ENCODE measurements at regions of chr10 and their contacts with region 1.

Region 1: DNA sequence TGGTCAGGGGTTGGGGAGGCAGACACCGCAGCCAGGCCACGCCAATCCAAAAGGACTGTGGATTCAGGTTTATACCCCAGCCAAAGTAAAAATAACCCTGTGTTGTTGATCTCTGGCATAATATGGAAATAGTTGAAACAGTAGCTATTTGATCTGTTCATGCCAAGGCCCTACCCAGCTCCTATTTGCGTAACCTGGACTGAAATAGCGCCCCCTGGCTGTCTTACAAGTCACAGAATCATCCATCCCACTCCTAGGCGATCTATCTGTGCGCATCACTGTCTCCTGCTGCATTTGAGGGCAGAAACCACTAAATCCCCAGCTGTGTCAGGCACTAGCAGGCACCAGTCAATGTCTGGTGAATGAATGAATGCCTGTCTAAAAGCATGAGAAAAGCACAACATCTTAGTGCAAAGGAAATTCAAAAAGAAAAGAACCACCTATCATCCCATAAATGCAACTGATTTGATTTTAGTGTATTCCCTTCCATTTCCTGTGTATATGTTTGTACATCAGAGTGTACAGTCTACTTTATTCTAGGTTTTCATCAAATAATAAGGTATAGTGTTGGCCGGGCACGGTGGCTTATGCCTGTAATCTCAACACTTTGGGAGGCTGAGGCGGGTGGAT is 160.0 kb downstream of the SLIT1 start:
- DNase-seq: peak; percentile 70
- CTCF ChIP-seq: peak; percentile 44

Region 2: DNA sequence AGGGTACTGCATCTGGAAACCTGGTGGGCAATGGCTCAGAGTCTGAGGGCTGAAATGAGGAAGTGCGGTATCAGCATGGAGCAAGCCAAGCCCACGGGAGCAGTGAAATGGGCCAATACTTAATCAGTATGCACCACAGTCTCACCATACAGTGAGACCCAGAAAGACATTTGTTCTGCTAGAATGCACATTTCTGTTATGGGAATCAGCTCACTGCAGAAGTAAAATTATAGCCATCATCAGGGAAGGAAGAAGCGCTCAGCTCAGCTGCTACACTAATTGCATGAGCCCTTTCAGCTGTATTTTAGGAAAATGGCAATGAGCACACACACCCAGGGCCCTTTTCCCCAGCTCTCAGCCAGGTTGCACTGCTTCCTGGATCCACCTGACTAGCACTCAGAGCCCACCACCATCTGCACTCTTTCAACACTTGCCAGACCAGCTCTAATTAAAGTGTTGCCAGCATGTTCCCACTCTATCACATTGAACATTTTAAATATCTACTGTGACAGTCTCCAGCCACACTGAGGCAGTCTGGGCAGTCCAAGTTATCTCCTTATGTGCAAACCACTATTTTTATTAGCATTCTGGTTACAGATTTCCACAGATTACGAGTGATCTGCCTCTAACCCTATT is 261.2 kb before region 1 on chr10:
- CTCF ChIA-PET with region 1: interaction called, 10 read pairs
- POLR2A ChIA-PET with region 1: no interaction called
- DNase-seq: peak; percentile 32
- CTCF ChIP-seq: no peak

Region 3: GRCh38 chr10:96878057-96878456 is 147.7 kb before region 1 on chr10:
- CTCF ChIA-PET with region 1: no interaction called
- POLR2A ChIA-PET with region 1: no interaction called
- DNase-seq: no peak
- CTCF ChIP-seq: no peak

Region 4: DNA sequence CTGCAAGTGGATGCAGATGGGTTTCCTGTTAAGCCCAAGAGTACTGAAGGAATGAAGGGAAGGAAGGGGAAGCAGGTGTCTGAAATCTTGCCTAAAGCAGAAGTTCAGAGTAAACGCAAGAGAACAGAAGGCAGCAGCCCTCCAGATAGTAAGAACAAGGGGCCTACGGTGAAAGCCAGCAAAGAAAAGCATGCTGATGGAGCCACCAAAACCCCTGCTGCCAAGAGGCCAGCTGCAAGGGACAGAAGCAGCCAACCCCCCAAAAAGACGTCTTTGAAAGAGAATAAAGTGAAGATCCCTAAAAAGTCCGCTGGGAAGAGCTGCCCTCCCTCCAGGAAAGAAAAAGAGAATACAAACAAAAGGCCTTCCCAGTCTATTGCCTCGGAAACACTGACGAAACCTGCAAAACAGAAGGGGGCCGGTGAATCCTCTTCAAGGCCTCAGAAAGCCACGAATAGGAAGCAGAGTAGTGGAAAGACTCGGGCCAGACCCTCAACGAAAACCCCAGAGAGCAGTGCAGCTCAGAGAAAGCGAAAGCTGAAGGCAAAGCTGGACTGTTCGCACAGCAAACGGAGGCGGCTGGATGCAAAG is 41.1 kb before region 1 on chr10:
- CTCF ChIA-PET with region 1: interaction called, 14 read pairs
- POLR2A ChIA-PET with region 1: no interaction called
- DNase-seq: peak; percentile 60
- CTCF ChIP-seq: no peak

Region 5: GRCh38 chr10:97003151-97003803 is 22.5 kb before region 1 on chr10:
- CTCF ChIA-PET with region 1: interaction called, 16 read pairs
- POLR2A ChIA-PET with region 1: no interaction called
- DNase-seq: no peak
- CTCF ChIP-seq: no peak

Region 6: GRCh38 chr10:97042746-97043565 is 17.2 kb after region 1 on chr10:
- CTCF ChIA-PET with region 1: interaction called, 136 read pairs
- POLR2A ChIA-PET with region 1: no interaction called
- DNase-seq: no peak
- CTCF ChIP-seq: no peak

Measured in GM10248 (cell line).